K562 (cell line): ENCODE measurements at regions of chr19 and their contacts with region 1.

Region 1: DNA sequence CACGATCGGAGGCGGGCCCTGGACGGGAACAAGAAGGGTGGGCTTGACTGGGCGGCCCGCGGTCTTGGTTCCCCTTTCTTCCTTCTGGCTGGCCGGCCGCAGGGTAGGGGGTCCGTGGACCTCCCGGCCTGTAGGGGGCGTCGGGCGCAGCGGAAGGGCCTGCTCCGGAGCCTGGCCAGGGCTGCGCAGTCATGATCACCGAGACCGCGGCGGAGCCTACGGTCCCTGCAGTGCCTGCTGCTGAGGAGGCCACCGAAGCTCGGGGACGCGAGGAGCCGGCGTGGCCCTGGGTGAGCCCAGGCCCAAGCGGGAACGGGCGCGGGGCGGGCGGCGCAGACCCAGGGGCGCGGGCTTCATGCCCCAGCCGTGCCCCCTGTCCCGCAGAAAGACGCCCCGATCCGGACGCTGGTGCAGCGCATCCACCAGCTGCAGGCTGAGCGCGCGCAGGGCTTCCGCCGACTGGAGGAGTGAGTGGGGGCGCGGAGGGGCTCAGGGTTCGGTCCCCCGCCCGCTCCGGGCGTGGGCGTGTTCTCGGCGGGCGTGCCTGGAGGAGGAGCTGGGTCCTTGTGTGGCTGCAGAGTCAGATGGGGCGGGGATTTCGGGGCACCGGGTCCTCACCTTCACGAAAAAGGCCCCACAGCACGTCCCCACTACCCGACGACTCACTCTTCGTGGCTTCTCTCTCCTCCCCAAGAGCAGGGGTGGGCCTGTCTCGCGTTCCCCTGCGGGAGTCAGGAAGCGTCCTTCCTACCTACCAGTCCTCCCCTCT is at the start of gene REX1BD:
- DNase-seq: peak; percentile 86 to 94 (median 89)
- ATAC-seq: peak; percentile 85
- H3K4me3 ChIP-seq: peak within 1 kb of the TSS; percentile 71
- H3K27ac ChIP-seq: peak within 1 kb of the TSS; percentile 79
- H3K4me1 ChIP-seq: peaks cover 20 to 60% of the 10 kb centered on the region in 2 experiments
- H3K27me3 ChIP-seq: no peaks in the 10 kb centered on the region
- CTCF ChIP-seq: peak; percentile 76 to 92 (median 88)
- EP300 ChIP-seq: peak; percentile 51
- POLR2A ChIP-seq: peak; percentile 91
- RAD21 ChIP-seq: peak; percentile 28 to 30; a peak in 3 of 4 replicates
- polyA plus RNA-seq, gene REX1BD: 1.9 to 4.7 TPM

Region 2: DNA sequence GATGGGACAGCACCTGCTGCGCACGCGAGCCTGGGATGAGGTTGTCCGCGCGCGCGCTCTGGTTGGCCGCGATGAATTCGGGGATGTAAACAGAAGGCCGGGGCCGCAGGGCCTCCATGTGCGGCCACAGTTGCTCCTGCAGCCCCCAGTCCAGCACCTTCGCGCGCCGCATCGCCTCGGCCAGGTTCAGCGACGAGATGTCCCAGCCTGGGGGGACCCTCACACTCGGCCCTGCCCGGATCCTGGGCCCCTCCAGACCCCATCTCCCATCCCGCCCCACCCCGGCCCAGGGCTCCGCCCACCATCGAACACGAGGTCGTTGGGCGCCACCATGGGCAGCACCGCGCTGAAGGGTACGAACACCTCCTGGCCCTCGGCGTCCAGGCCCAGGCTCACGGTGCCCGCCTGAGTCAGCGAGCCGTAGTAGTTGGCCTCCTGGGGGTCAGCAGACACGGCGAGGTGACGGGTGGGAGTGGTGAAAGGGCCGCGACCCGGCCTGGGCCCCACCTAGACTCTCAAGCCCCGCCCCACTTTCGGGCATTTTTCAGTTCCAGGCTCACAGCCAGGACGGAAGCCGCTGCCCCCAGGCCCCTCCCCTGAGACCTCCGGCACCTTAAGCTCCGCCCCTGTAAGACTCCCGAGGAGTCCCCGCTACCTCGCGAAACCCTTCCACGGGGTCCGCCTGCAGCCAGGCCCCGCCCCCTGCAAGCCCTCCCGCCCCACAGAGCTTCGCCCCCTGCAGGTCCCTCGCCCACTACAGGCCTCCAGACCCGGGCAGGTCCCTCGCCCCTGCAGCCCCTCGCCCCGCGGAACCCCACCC is 151.9 kb before region 1 on chr19:
- CTCF ChIA-PET with region 1: no interaction called
- POLR2A ChIA-PET with region 1: no interaction called
- in situ Hi-C with region 1: no loop called
- intact Hi-C with region 1: no loop called
- DNase-seq: peak; percentile 82 to 98 (median 89)
- ATAC-seq: peak; percentile 68
- H3K4me3 ChIP-seq: peak overlapping the region; percentile 77
- H3K27ac ChIP-seq: peak overlapping the region; percentile 94
- H3K4me1 ChIP-seq: peaks cover 50 to 96% of the 10 kb centered on the region in 2 experiments
- H3K27me3 ChIP-seq: no peaks in the 10 kb centered on the region
- CTCF ChIP-seq: no peak
- EP300 ChIP-seq: no peak
- POLR2A ChIP-seq: no peak; the same call in 1 of the 2 replicates
- RAD21 ChIP-seq: no peak

Region 3: GRCh38 chr19:18478569-18479311 is 110.1 kb before region 1 on chr19:
- CTCF ChIA-PET with region 1: no interaction called
- POLR2A ChIA-PET with region 1: no interaction called
- in situ Hi-C with region 1: no loop called
- intact Hi-C with region 1: loop called (anchors 5 kb)
- DNase-seq: peak in 2 of 4 experiments; percentile 69 to 71
- ATAC-seq: peak; percentile 82
- H3K4me3 ChIP-seq: no peak overlapping the region
- H3K27ac ChIP-seq: peak overlapping the region; percentile 51; the same call in 2 of the 3 replicates
- H3K4me1 ChIP-seq: peaks cover 42 to 60% of the 10 kb centered on the region in 2 experiments
- H3K27me3 ChIP-seq: no peaks in the 10 kb centered on the region
- CTCF ChIP-seq: no peak
- EP300 ChIP-seq: peak; percentile 56
- POLR2A ChIP-seq: no peak
- RAD21 ChIP-seq: 0 out of 4 replicates have a peak, but pooled peaks of 1 of the 2 experiments have one; percentile 6

Region 4: GRCh38 chr19:18557474-18558201 is 31.2 kb before region 1 on chr19 and contains the start of gene KXD1:
- CTCF ChIA-PET with region 1: no interaction called
- POLR2A ChIA-PET with region 1: interaction called, 9 read pairs
- in situ Hi-C with region 1: no loop called
- intact Hi-C with region 1: loop called (anchors 1 kb)
- DNase-seq: peak; percentile 87 to 100 (median 95)
- ATAC-seq: peak; percentile 98
- H3K4me3 ChIP-seq: peak within 1 kb of the TSS; percentile 77
- H3K27ac ChIP-seq: peak within 1 kb of the TSS; percentile 81
- H3K4me1 ChIP-seq: peaks cover 8 to 23% of the 10 kb centered on the region in 2 experiments; a peak in 4 of 5 replicates
- H3K27me3 ChIP-seq: no peaks in the 10 kb centered on the region
- CTCF ChIP-seq: no peak
- EP300 ChIP-seq: no peak
- POLR2A ChIP-seq: peak; percentile 80
- RAD21 ChIP-seq: no peak
- polyA plus RNA-seq, gene KXD1: 21.9 to 41.3 TPM

Region 5: DNA sequence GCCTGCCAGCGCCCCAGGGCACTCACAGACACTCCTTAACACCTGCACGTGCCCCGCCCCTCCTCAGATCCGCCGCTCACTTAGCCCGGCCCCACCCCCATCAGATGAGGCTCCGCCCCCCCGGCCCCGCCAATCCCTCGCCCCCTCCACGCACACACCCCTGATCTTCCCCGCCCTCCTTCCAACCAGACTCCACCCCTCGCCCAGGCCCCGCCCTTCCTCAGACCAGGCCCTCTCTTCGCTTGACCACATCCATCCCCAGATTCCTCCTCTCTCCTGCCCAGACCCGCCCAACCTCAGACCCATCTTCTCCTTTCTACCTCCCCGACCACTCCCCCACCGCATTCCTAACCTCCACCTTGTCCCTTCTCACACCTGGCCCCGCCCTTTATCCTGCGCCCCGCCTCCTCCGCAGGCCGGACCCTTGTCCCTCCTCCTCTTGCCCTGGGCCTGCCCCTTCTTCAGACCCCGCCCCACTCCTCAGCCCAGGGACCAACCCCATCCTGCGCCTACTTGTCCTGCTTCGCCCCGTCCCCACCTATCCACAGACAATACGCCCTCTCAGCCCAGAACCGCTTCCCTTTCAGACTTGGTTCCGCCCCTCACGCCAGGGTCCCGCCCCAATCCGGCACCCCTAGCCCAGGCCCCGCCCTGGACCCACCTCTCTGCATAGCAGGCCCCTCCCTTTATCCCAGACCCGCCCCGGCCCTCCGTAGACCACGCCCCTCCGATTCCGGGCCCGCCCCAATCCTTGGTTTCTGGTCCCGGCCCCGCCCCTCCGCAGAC is 47.6 kb after region 1 on chr19:
- CTCF ChIA-PET with region 1: no interaction called
- POLR2A ChIA-PET with region 1: interaction called, 3 read pairs
- in situ Hi-C with region 1: no loop called
- intact Hi-C with region 1: loop called (anchors 5 kb)
- DNase-seq: peak; percentile 94 to 99 (median 98)
- ATAC-seq: peak; percentile 95
- H3K4me3 ChIP-seq: peak overlapping the region; percentile 100
- H3K27ac ChIP-seq: peak overlapping the region; percentile 44
- H3K4me1 ChIP-seq: peaks cover 4 to 25% of the 10 kb centered on the region in 2 experiments; a peak in 4 of 5 replicates
- H3K27me3 ChIP-seq: peaks cover 10 to 16% of the 10 kb centered on the region in 2 experiments; a peak in 4 of 5 replicates
- CTCF ChIP-seq: no peak; a peak in 1 of 6 replicates
- EP300 ChIP-seq: no peak
- POLR2A ChIP-seq: no peak
- RAD21 ChIP-seq: no peak

Region 6: GRCh38 chr19:18846862-18847548 is 258.2 kb after region 1 on chr19:
- CTCF ChIA-PET with region 1: interaction called, 4 read pairs
- POLR2A ChIA-PET with region 1: interaction called, 5 read pairs
- in situ Hi-C with region 1: no loop called
- intact Hi-C with region 1: loop called (anchors 10 kb)
- DNase-seq: peak in 3 of 4 experiments; percentile 53 to 69 (median 65)
- ATAC-seq: peak; percentile 89
- H3K4me3 ChIP-seq: no peak overlapping the region
- H3K27ac ChIP-seq: 0 out of 3 replicates have a peak overlapping the region, but pooled peaks have one; percentile 21
- H3K4me1 ChIP-seq: peaks cover 2 to 30% of the 10 kb centered on the region in 2 experiments; a peak in 3 of 5 replicates
- H3K27me3 ChIP-seq: no peaks in the 10 kb centered on the region; a peak in 1 of 5 replicates
- CTCF ChIP-seq: peak; percentile 78 to 80 (median 80)
- EP300 ChIP-seq: no peak
- POLR2A ChIP-seq: no peak
- RAD21 ChIP-seq: peak; percentile 74 to 75